ENCODE measurements at regions of chr10 and their contacts with region 1.

Region 1: DNA sequence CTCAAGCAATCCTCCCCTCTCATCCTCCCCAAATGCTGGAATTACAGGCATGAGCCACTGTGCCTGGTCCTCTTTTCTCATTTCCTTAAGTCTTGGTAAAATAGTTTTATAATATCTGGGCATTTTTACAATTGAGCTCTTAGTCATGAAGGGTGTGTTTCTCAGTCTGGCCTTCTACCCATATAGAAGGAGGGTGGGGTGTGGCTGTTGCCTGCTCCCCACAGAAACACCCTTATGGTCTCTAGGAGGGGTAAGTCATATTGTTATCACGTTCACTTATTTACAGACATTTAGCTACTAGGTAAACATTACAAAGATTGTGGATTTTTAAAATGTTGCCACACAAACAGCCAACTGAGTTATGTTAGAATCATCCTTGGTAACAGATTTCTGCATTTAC is 6.7 kb upstream of the OTUD1 start:
- DNase-seq: no peak
- ATAC-seq: no peak; the same call in 1 of the 2 replicates
- H3K4me3 ChIP-seq: no peak overlapping the region
- H3K27ac ChIP-seq: no peak overlapping the region
- H3K4me1 ChIP-seq: no peaks in the 10 kb centered on the region
- H3K27me3 ChIP-seq: peaks cover 2% of the 10 kb centered on the region; the same call in 1 of the 2 replicates
- CTCF ChIP-seq: no peak
- POLR2A ChIP-seq: no peak
- RAD21 ChIP-seq: no peak

Region 2: GRCh38 chr10:23381298-23381697 is 50.9 kb before region 1 on chr10:
- CTCF ChIA-PET with region 1: no interaction called
- POLR2A ChIA-PET with region 1: no interaction called
- dilution Hi-C with region 1: no loop called
- in situ Hi-C with region 1: no loop called
- intact Hi-C with region 1: no loop called
- DNase-seq: no peak
- ATAC-seq: no peak
- H3K4me3 ChIP-seq: no peak overlapping the region
- H3K27ac ChIP-seq: no peak overlapping the region
- H3K4me1 ChIP-seq: 0 out of 2 replicates have a peak, but pooled peaks cover 2% of the 10 kb centered on the region
- H3K27me3 ChIP-seq: peaks cover 3% of the 10 kb centered on the region; the same call in 1 of the 2 replicates
- CTCF ChIP-seq: no peak
- POLR2A ChIP-seq: no peak
- RAD21 ChIP-seq: no peak

Region 3: DNA sequence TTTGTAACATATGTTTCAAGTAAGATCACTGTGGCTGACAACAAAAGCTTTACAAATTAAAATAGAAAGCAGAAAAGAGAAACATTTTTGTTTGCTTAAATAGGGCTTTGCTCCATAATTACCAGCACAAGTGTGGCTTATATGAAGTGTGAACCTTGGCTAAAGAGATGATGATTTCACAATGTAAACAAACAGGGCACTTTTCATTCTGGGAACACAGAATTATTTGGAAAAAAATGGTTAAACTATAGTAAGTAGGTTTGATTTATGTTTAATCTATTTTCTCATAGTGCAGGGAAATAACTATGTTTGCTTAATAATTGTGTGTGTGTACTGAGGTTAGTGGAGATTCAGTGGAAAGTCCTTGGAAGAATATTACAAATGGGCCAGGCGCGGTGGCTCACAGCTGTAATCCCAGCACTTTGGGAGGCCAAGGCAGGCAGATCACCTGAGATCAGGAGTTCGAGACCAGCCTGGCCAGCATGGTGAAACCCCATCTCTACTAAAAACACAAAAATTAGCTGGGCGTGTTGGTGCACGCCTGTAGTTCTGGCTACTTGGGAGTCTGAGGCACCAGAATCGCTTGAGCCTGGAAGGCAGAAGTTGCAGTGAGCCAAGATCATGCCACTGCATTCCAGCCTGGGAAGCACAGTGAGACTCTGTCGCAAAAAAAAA is 12.4 kb before region 1 on chr10:
- CTCF ChIA-PET with region 1: no interaction called
- POLR2A ChIA-PET with region 1: interaction called, 10 read pairs
- dilution Hi-C with region 1: no loop called
- in situ Hi-C with region 1: no loop called
- intact Hi-C with region 1: no loop called
- DNase-seq: no peak
- ATAC-seq: no peak
- H3K4me3 ChIP-seq: no peak overlapping the region
- H3K27ac ChIP-seq: no peak overlapping the region
- H3K4me1 ChIP-seq: no peaks in the 10 kb centered on the region; the same call in 1 of the 2 replicates
- H3K27me3 ChIP-seq: peaks cover 7% of the 10 kb centered on the region; the same call in 1 of the 2 replicates
- CTCF ChIP-seq: no peak
- POLR2A ChIP-seq: no peak
- RAD21 ChIP-seq: no peak

Region 4: GRCh38 chr10:23493711-23494110 is 61.5 kb after region 1 on chr10:
- CTCF ChIA-PET with region 1: no interaction called
- POLR2A ChIA-PET with region 1: no interaction called
- dilution Hi-C with region 1: no loop called
- in situ Hi-C with region 1: no loop called
- intact Hi-C with region 1: no loop called
- DNase-seq: no peak
- ATAC-seq: no peak
- H3K4me3 ChIP-seq: no peak overlapping the region
- H3K27ac ChIP-seq: no peak overlapping the region
- H3K4me1 ChIP-seq: no peaks in the 10 kb centered on the region
- H3K27me3 ChIP-seq: no peaks in the 10 kb centered on the region
- CTCF ChIP-seq: no peak
- POLR2A ChIP-seq: no peak
- RAD21 ChIP-seq: no peak

Region 5: GRCh38 chr10:23664024-23664423 is 231.9 kb after region 1 on chr10:
- CTCF ChIA-PET with region 1: no interaction called
- POLR2A ChIA-PET with region 1: no interaction called
- dilution Hi-C with region 1: no loop called
- in situ Hi-C with region 1: no loop called
- intact Hi-C with region 1: no loop called
- DNase-seq: no peak
- ATAC-seq: no peak
- H3K4me3 ChIP-seq: no peak overlapping the region
- H3K27ac ChIP-seq: no peak overlapping the region
- H3K4me1 ChIP-seq: no peaks in the 10 kb centered on the region
- H3K27me3 ChIP-seq: no peaks in the 10 kb centered on the region
- CTCF ChIP-seq: no peak
- POLR2A ChIP-seq: no peak
- RAD21 ChIP-seq: no peak